ENCODE measurements at regions of chr11 and their contacts with region 1.

Region 1: DNA sequence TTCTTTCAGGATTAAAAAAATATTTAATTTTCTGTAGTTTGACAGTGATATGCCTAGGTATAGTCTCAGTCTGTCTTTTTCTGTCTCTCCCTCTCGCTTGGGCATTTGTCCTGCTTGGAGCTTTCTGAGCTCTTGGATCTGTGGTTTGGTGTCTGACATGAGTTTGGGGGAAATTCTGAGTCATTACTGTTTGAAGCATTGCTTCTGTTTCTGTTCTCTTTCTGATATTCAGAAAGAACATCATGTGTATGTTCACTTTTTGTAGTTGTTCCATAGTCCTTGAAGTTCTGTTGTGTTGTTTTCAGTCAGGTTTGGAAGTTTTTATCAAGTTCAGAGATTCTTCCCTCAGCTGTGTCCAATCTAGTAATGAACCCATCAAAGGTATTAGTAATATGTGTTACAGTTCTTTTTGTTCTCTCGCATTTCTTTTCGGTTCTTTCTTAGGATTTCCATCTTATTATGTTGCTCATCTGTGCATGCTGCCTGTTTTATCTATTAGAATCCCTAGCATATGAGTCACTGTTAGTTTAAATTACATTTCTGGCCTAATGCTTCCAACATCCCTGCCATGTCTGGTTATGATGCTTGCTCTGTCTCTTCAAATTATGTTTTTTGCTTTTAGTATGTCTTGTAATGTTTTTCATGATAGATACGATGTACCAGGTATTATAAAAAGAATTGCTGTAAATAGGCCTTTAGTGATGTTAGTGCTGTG is 48.4 kb downstream of the DDX10 start:
- DNase-seq: no peak
- H3K4me3 Mint-ChIP-seq: no peak overlapping the region
- H3K27ac Mint-ChIP-seq: peak overlapping the region; percentile 11
- H3K4me1 Mint-ChIP-seq: peaks cover 19% of the 10 kb centered on the region
- H3K27me3 Mint-ChIP-seq: no peaks in the 10 kb centered on the region

Region 2: DNA sequence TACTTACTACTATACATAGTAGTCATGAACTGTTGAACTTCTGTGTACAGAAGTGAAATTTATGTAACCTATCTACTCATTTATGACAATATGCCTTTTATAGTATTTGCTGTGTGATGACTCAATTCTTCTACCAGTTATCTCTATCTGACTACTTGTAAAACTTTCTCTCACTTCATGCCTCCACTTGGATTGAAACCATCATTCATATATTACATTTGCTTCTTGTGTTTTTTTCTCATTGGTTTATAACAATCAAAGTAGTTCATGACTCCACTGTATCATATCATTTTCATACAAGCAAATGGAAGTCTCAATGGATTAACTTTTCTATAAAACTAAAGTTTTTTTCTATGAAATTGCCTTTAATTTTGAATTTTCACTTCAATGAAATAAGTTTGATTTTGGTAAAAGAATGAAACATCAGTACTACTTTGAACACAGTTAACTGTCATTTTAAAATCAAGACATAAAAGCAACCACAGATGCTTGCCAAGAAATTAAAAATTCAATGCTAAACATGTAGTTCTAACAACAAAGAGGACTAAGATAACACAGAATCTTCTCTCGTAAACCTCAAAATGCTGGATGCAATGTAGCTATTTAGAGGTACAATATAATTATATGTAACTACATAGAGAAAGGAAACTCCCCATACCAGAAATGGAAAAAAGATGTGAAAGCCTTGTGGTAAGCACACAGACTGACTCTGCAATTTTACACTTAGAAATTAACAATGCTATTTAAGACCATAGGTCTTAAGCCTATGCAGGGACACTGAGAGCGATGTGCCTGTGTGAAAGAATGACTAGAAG is 92.1 kb before region 1 on chr11:
- CTCF ChIA-PET with region 1: no interaction called
- POLR2A ChIA-PET with region 1: no interaction called
- intact Hi-C with region 1: no loop called
- DNase-seq: no peak
- H3K4me3 Mint-ChIP-seq: no peak overlapping the region
- H3K27ac Mint-ChIP-seq: no peak overlapping the region
- H3K4me1 Mint-ChIP-seq: peaks cover 21% of the 10 kb centered on the region
- H3K27me3 Mint-ChIP-seq: peaks cover 20% of the 10 kb centered on the region

Region 3: DNA sequence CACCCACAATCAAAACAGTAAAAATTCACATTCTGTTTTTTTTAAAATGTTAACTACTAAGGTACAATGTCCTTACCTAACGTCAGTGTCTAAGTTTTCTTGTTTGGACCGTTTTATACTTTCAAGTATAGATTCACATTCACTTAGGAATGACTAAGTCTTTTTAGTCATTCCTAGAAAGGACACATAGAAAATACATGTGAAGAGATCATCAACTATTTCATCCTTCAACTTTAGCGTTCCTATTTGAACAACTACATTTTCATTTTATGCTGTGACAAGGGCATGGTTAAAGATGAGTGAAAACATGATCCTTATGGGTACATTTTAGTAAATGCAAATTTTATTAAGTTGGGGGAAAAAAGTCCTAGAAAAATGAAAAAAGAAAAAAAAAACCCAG is 14.4 kb after region 1 on chr11:
- CTCF ChIA-PET with region 1: no interaction called
- POLR2A ChIA-PET with region 1: interaction called, 5 read pairs
- intact Hi-C with region 1: loop called (anchors 1 kb)
- DNase-seq: no peak
- H3K4me3 Mint-ChIP-seq: no peak overlapping the region
- H3K27ac Mint-ChIP-seq: peak overlapping the region; percentile 58
- H3K4me1 Mint-ChIP-seq: peaks cover 47% of the 10 kb centered on the region
- H3K27me3 Mint-ChIP-seq: no peaks in the 10 kb centered on the region

Region 4: GRCh38 chr11:108751444-108751843 is 38.2 kb after region 1 on chr11:
- CTCF ChIA-PET with region 1: no interaction called
- POLR2A ChIA-PET with region 1: no interaction called
- intact Hi-C with region 1: no loop called
- DNase-seq: no peak
- H3K4me3 Mint-ChIP-seq: no peak overlapping the region
- H3K27ac Mint-ChIP-seq: no peak overlapping the region
- H3K4me1 Mint-ChIP-seq: peaks cover 33% of the 10 kb centered on the region
- H3K27me3 Mint-ChIP-seq: no peaks in the 10 kb centered on the region

Region 5: DNA sequence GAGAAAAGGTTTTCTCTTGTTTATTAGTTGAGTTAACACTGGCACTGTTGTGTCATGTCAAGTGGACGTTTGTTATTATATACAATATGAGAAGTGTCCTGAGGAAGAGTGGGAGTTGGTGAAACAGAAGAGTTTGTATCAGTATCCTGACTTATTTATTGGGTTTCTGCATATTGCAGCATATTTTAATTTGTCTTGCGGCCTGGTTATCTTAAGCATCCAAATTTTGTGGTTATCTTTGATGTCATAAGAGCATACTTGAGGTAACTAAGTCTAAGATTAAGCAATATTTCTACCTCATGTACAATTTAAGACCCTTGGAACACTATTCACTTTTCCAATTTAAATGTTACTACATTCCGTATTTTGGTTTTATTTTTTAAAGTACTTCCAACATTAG is 55.1 kb after region 1 on chr11:
- CTCF ChIA-PET with region 1: no interaction called
- POLR2A ChIA-PET with region 1: no interaction called
- intact Hi-C with region 1: no loop called
- DNase-seq: no peak
- H3K4me3 Mint-ChIP-seq: no peak overlapping the region
- H3K27ac Mint-ChIP-seq: no peak overlapping the region
- H3K4me1 Mint-ChIP-seq: peaks cover 8% of the 10 kb centered on the region
- H3K27me3 Mint-ChIP-seq: no peaks in the 10 kb centered on the region

Measured in activated CD4-positive, alpha-beta memory T cell treated with anti-CD3 and anti-CD28 coated beads for 36 hours (primary cell).